ENCODE measurements at regions of chr21 and their contacts with region 1.

Region 1: DNA sequence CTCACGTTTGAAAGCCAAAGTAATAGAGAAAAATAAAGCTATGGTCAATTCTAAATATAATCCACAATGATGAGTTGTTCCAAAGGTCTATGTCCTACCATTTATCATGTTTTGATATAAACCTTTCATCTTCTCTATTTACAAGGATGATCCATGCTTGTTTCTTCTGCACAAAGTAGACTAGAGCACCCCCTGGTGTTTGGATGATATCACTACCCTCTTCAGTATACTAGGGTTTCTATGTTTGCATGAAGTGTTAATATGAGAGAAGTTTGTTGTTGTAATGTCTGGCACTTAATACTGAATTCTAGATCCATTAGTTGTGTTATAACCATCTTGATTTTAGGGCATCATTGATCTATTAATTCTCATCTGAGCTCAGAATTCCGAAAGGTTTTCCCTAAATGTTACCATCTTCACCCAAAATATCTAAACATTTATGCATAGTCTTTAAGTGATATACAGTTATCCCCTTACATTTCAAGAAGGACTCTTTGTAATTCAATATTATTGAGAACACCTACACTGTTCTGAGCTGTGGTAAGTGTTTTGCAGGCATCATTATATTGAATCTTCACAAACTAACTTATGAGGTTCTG is 21.1 kb downstream of the CLDN8 start:
- DNase-seq: peak; percentile 47
- H3K4me3 ChIP-seq: no peak overlapping the region
- H3K27ac ChIP-seq: no peak overlapping the region
- H3K4me1 ChIP-seq: no peaks in the 10 kb centered on the region
- H3K27me3 ChIP-seq: no peaks in the 10 kb centered on the region
- CTCF ChIP-seq: peak; percentile 42

Region 2: DNA sequence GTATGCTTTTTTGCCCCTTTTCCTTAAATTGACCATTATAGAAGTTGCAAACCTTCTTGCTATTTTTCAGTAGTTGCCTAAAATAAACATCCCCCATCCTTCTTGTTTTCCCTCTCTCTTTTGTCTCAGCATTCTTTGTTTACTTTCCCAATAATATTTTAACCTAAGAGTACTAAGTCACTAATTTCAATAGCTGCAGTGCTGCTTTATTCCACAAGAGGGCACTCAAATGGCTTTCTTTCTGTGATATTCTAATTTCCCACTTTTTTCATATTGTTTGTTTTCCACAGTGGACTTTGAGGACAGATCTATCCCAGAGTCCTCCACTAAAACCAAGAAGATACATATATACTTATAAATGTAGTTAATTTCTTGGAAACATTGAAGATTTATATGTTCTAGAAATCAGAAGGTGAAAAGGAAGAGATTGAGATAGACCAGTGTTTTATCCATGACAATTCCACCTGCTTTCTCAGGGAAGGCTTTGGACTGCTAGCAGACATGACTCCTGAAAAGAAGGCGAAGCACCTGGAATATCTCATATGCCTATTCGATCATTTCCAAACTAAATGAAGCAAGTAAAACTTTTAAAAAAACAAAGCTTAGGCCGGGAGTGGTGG is 150.2 kb before region 1 on chr21:
- intact Hi-C with region 1: loop called (anchors 5 kb)
- DNase-seq: peak; percentile 18
- H3K4me3 ChIP-seq: no peak overlapping the region
- H3K27ac ChIP-seq: no peak overlapping the region
- H3K4me1 ChIP-seq: no peaks in the 10 kb centered on the region
- H3K27me3 ChIP-seq: no peaks in the 10 kb centered on the region
- CTCF ChIP-seq: peak; percentile 82

Region 3: GRCh38 chr21:30072496-30072895 is 122.3 kb before region 1 on chr21:
- intact Hi-C with region 1: loop called (anchors 10 kb)
- DNase-seq: peak; percentile 46
- H3K4me3 ChIP-seq: no peak overlapping the region
- H3K27ac ChIP-seq: no peak overlapping the region
- H3K4me1 ChIP-seq: no peaks in the 10 kb centered on the region
- H3K27me3 ChIP-seq: no peaks in the 10 kb centered on the region
- CTCF ChIP-seq: peak; percentile 27

Region 4: GRCh38 chr21:30097791-30098190 is 97.0 kb before region 1 on chr21:
- intact Hi-C with region 1: no loop called
- DNase-seq: no peak
- H3K4me3 ChIP-seq: no peak overlapping the region
- H3K27ac ChIP-seq: no peak overlapping the region
- H3K4me1 ChIP-seq: no peaks in the 10 kb centered on the region
- H3K27me3 ChIP-seq: no peaks in the 10 kb centered on the region
- CTCF ChIP-seq: no peak